Caco-2 (cell line): ENCODE measurements at regions of chr7 and their contacts with region 1.

Region 1: GRCh38 chr7:154913638-154914312 is 89.1 kb downstream of the PAXIP1 start:
- DNase-seq: peak; percentile 83 to 90
- H3K4me3 ChIP-seq: no peak overlapping the region
- H3K4me3 Mint-ChIP-seq: no peak overlapping the region
- H3K27ac Mint-ChIP-seq: no peak overlapping the region
- H3K4me1 ChIP-seq: no peaks in the 10 kb centered on the region
- H3K4me1 Mint-ChIP-seq: no peaks in the 10 kb centered on the region
- H3K27me3 ChIP-seq: no peaks in the 10 kb centered on the region
- H3K27me3 Mint-ChIP-seq: no peaks in the 10 kb centered on the region
- CTCF ChIP-seq: peak; percentile 86 to 90

Region 2: GRCh38 chr7:154832557-154833138 is 81.1 kb before region 1 on chr7:
- CTCF ChIA-PET with region 1: no interaction called
- POLR2A ChIA-PET with region 1: no interaction called
- intact Hi-C with region 1: loop called (anchors 10 kb)
- DNase-seq: peak; percentile 25 to 51
- H3K4me3 ChIP-seq: no peak overlapping the region
- H3K4me3 Mint-ChIP-seq: no peak overlapping the region
- H3K27ac Mint-ChIP-seq: no peak overlapping the region
- H3K4me1 ChIP-seq: no peaks in the 10 kb centered on the region
- H3K4me1 Mint-ChIP-seq: no peaks in the 10 kb centered on the region
- H3K27me3 ChIP-seq: no peaks in the 10 kb centered on the region
- H3K27me3 Mint-ChIP-seq: peaks cover 16% of the 10 kb centered on the region
- CTCF ChIP-seq: peak in 1 of 2 experiments; percentile 41

Region 3: DNA sequence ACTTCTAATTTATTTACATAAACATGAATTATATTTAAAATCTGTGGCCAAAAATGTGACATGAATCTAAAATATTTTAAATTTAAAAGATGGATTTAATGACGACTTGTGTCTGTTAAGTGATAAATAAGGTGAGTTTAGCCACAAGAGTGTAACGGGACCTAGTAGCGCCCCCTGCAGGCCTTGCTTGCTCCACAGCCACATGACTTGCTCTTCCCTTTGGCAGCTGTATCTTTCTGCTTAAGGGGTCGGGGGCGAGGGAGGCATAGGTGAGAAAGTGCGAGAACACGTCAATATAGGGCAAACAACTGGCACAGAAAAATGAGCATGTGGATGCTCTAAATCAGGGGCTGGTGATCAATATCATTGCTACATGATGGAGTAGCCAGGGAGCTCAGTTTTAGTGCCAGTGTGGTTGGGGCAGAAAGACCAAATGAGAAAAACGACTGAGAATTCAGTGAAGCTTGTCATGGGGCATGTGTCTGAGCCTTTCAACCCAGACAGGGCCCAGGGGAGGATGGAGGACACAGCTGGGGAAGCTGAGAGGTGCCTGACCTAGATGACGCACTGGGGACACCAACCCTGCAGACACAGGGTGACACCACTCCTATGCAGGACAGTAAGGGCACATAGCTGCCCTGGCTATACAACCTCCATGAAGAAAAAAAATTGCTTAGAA is 39.4 kb after region 1 on chr7:
- CTCF ChIA-PET with region 1: no interaction called
- POLR2A ChIA-PET with region 1: no interaction called
- intact Hi-C with region 1: loop called (anchors 5 kb)
- DNase-seq: peak in 1 of 2 experiments; percentile 63
- H3K4me3 ChIP-seq: no peak overlapping the region
- H3K4me3 Mint-ChIP-seq: no peak overlapping the region
- H3K27ac Mint-ChIP-seq: no peak overlapping the region
- H3K4me1 ChIP-seq: no peaks in the 10 kb centered on the region
- H3K4me1 Mint-ChIP-seq: no peaks in the 10 kb centered on the region
- H3K27me3 ChIP-seq: no peaks in the 10 kb centered on the region
- H3K27me3 Mint-ChIP-seq: no peaks in the 10 kb centered on the region
- CTCF ChIP-seq: peak; percentile 54 to 56